Adrenal gland (tissue), 19 donors: ENCODE measurements at regions of chr19 and their contacts with region 1.

Region 1: DNA sequence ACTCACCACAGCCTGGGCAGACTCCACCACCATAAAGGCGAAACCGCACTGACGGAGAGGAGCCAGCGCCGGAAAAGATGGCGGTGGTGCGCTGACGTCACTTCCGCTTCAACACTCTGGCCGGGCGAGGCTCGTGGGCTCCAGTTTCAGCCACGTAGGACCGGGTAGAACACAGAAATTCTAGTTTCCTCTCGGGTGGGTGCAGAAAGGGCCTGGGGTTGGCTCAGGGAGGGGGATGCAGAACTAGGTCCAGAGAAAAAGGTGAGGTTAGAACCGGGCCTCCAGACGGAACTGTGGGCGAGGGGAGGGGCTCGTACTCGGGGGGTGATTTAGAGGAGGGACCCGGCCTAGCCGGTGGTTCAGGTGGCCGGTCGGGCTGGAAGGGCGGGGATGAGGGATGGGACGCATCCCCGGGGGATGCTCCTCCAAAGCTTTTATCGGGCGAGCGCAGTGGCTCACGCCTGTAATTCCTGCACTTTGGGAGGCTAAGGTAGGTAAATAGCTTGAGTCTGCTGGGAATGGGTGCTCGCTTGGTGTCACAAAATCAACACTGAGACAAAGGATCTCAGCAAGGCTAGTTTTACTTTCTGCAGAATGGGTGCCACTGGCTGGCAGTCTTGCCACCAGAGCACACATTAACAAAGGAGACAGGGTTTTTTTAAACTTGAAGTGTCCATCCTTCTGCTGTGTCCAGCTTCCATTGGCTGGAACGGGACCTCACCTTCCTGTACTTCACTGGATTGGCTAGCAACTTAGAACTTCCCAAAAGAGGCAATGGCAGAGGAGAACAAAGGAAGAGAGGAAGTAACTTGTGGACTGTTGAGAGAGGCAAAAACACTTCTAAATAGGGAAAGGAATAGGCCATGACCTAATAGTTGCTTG is at the start of gene ZNF561:
- DNase-seq: peak; percentile 78 to 92 (median 85)
- H3K4me3 ChIP-seq: peak within 1 kb of the TSS; percentile 44 to 91 (median 79)
- H3K27ac ChIP-seq: peak within 1 kb of the TSS; percentile 85 to 95 (median 92)
- H3K4me1 ChIP-seq: peaks cover 9 to 24% of the 10 kb centered on the region in 2 donors
- H3K27me3 ChIP-seq: no peaks in the 10 kb centered on the region
- CTCF ChIP-seq: peak in 1 of 6 experiments; percentile 9
- POLR2A ChIP-seq: peak in 1 of 2 donors; percentile 38
- total RNA-seq, gene ZNF561: 17.8 to 57.9 (median 34.6) TPM

Region 2: GRCh38 chr19:9140159-9140874 is 481.1 kb before region 1 on chr19 and contains the start of gene ZNF317:
- intact Hi-C with region 1: loop called in 1 of 2 experiments (anchors 10 kb)
- DNase-seq: peak; percentile 92 to 98 (median 94)
- H3K4me3 ChIP-seq: peak within 1 kb of the TSS; percentile 25 to 100 (median 84)
- H3K27ac ChIP-seq: peak within 1 kb of the TSS; percentile 71 to 92 (median 91)
- H3K4me1 ChIP-seq: peaks cover 0 to 22% of the 10 kb centered on the region in 2 donors
- H3K27me3 ChIP-seq: no peaks in the 10 kb centered on the region
- CTCF ChIP-seq: no peak
- POLR2A ChIP-seq: peak; percentile 10 to 68
- total RNA-seq, gene ZNF317: 18.3 to 32.9 (median 28.0) TPM

Region 3: GRCh38 chr19:9205501-9206113 is 415.8 kb before region 1 on chr19:
- intact Hi-C with region 1: loop called in 1 of 2 experiments (anchors 10 kb)
- DNase-seq: peak; percentile 59 to 86 (median 75)
- H3K4me3 ChIP-seq: peak overlapping the region in 2 of 4 donors; percentile 19 to 53
- H3K27ac ChIP-seq: no peak overlapping the region
- H3K4me1 ChIP-seq: no peaks in the 10 kb centered on the region
- H3K27me3 ChIP-seq: no peaks in the 10 kb centered on the region
- CTCF ChIP-seq: peak; percentile 71 to 87 (median 82)
- POLR2A ChIP-seq: no peak

Region 4: DNA sequence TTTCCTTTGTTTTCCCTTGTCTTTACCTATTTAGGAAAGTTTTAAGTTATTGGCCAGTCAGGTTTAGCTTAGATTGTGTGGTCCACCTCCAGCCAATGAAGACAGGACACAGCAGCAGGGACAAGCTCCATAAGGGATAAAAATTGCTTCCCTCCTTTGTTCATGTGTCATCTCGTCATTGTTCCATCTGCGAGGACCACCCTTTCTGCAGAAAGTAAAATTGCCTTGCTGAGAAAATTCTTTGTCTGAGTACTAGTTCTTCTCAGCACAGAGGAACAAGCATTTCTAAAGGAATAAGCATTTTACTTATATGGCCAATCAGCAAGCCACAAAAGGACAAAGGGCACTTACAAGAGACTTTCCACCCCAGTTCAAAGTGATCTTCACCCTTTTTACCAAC is 134.4 kb before region 1 on chr19:
- intact Hi-C with region 1: no loop called
- DNase-seq: no peak
- H3K4me3 ChIP-seq: no peak overlapping the region
- H3K27ac ChIP-seq: no peak overlapping the region
- H3K4me1 ChIP-seq: no peaks in the 10 kb centered on the region
- H3K27me3 ChIP-seq: no peaks in the 10 kb centered on the region
- CTCF ChIP-seq: no peak
- POLR2A ChIP-seq: no peak

Region 5: GRCh38 chr19:9570255-9570654 is 51.1 kb before region 1 on chr19:
- intact Hi-C with region 1: no loop called
- DNase-seq: no peak
- H3K4me3 ChIP-seq: no peak overlapping the region
- H3K27ac ChIP-seq: no peak overlapping the region
- H3K4me1 ChIP-seq: no peaks in the 10 kb centered on the region
- H3K27me3 ChIP-seq: no peaks in the 10 kb centered on the region
- CTCF ChIP-seq: no peak
- POLR2A ChIP-seq: no peak